ENCODE measurements at regions of chr3 and their contacts with region 1.

Region 1: DNA sequence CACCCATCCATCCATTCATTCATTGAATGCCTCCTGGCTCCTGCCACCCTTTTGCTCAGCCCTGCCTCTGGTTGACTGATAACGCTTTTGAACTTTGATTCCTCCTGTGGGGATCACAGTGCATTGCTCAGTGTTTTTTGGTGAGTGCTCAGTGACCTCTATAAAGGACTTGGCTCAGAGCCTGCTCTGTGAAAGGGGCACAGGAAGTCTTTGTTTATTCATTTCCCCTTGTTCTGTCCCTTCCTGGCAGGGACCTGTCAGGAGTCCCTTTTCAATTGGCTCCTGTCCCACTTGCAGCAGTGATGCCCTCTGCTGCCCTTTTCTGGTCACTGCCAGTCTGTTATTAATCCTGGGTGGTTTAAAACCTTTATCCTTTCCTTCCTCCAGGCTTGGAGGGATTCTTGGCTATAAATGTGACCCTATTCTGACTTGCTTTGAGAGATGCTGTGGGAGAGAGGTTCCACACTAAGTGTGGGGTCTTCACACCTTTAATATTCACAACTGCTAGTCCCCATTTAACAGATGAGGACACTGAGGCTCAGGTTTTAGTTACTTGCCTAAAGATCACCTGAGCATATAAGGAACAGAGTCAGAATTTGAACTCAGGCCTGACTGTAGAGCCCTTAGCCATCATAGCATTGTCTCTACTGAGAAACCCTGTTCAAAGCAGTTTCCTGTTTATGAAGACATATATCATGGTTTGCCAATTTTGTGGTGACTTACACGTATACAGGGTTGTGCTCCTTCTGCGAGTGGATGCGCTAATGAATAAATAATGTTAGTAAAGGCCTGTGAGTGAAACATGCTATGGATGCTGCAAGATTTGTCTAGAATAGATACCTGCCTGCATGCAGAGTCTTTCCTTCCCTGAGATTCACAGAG is 23.2 kb upstream of the TATDN2 start:
- DNase-seq: peak; percentile 63 to 67
- H3K4me3 ChIP-seq: no peak overlapping the region
- H3K4me3 Mint-ChIP-seq: no peak overlapping the region
- H3K27ac Mint-ChIP-seq: no peak overlapping the region
- H3K4me1 ChIP-seq: no peaks in the 10 kb centered on the region
- H3K4me1 Mint-ChIP-seq: peaks cover 7% of the 10 kb centered on the region
- H3K27me3 ChIP-seq: no peaks in the 10 kb centered on the region
- H3K27me3 Mint-ChIP-seq: no peaks in the 10 kb centered on the region
- CTCF ChIP-seq: peak; percentile 72 to 74

Region 2: DNA sequence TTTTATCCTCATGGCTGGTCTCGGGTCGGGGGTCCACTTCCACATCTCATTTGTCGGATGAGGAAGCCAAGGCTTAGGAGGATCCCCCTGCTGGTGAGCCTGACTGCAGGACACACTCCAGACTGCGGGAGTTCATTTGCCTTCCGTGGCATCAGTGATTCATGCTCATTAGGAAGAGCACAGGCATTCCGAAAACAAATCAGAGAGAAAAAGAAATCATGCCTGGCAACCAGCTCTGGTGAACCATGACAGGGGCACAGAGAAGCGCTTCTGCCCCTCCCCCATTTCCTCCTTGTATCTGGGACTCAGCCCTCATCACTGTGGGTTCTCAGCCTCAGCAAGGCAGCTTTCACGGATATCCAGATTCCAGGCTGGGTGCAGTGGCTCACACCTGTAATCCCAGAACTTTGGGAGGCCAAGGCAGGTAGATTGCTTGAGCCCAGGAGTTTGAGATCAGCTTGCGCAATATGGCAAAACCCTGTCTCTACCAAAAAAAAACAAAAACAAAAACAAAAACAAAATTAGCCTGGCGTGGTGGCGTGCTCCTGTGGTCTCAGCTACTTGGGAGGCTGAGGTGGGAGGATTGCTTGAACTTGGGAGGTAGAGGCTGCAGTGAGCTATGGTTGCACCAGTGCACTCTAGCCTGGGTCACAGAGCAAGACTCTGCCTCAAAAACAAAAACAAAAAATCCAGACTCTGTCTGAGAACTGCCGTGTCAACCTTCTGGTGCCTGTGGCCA is 31.9 kb before region 1 on chr3:
- CTCF ChIA-PET with region 1: interaction called, 5 read pairs
- POLR2A ChIA-PET with region 1: no interaction called
- intact Hi-C with region 1: loop called (anchors 2 kb)
- DNase-seq: no peak
- H3K4me3 ChIP-seq: no peak overlapping the region
- H3K4me3 Mint-ChIP-seq: no peak overlapping the region
- H3K27ac Mint-ChIP-seq: peak overlapping the region; percentile 85
- H3K4me1 ChIP-seq: peaks cover 45% of the 10 kb centered on the region
- H3K4me1 Mint-ChIP-seq: peaks cover 28% of the 10 kb centered on the region
- H3K27me3 ChIP-seq: no peaks in the 10 kb centered on the region
- H3K27me3 Mint-ChIP-seq: no peaks in the 10 kb centered on the region
- CTCF ChIP-seq: peak in 1 of 2 experiments; percentile 11

Region 3: GRCh38 chr3:10366651-10367101 is 141.7 kb after region 1 on chr3:
- CTCF ChIA-PET with region 1: no interaction called
- POLR2A ChIA-PET with region 1: no interaction called
- intact Hi-C with region 1: no loop called
- DNase-seq: no peak
- H3K4me3 ChIP-seq: no peak overlapping the region
- H3K4me3 Mint-ChIP-seq: no peak overlapping the region
- H3K27ac Mint-ChIP-seq: no peak overlapping the region
- H3K4me1 ChIP-seq: no peaks in the 10 kb centered on the region
- H3K4me1 Mint-ChIP-seq: no peaks in the 10 kb centered on the region
- H3K27me3 ChIP-seq: no peaks in the 10 kb centered on the region
- H3K27me3 Mint-ChIP-seq: peaks cover 19% of the 10 kb centered on the region
- CTCF ChIP-seq: no peak

Region 4: GRCh38 chr3:10518506-10519150 is 293.6 kb after region 1 on chr3:
- CTCF ChIA-PET with region 1: no interaction called
- POLR2A ChIA-PET with region 1: no interaction called
- intact Hi-C with region 1: no loop called
- DNase-seq: peak in 1 of 2 experiments; percentile 13
- H3K4me3 ChIP-seq: no peak overlapping the region
- H3K4me3 Mint-ChIP-seq: no peak overlapping the region
- H3K27ac Mint-ChIP-seq: no peak overlapping the region
- H3K4me1 ChIP-seq: no peaks in the 10 kb centered on the region
- H3K4me1 Mint-ChIP-seq: no peaks in the 10 kb centered on the region
- H3K27me3 ChIP-seq: no peaks in the 10 kb centered on the region; the same call in none of the 2 replicates
- H3K27me3 Mint-ChIP-seq: peaks cover 20% of the 10 kb centered on the region
- CTCF ChIP-seq: no peak

Region 5: GRCh38 chr3:11226042-11226370 is 1001.0 kb after region 1 on chr3:
- CTCF ChIA-PET with region 1: no interaction called
- POLR2A ChIA-PET with region 1: no interaction called
- intact Hi-C with region 1: no loop called
- DNase-seq: no peak
- H3K4me3 ChIP-seq: peak overlapping the region; percentile 54
- H3K4me3 Mint-ChIP-seq: peak overlapping the region; percentile 89
- H3K27ac Mint-ChIP-seq: peak overlapping the region; percentile 83
- H3K4me1 ChIP-seq: no peaks in the 10 kb centered on the region
- H3K4me1 Mint-ChIP-seq: no peaks in the 10 kb centered on the region
- H3K27me3 ChIP-seq: no peaks in the 10 kb centered on the region
- H3K27me3 Mint-ChIP-seq: no peaks in the 10 kb centered on the region
- CTCF ChIP-seq: no peak

Measured in Caco-2 (cell line).